Activated T-helper 2 cell treated with anti-CD3 and anti-CD28 coated beads, Interferon-gamma antibody, Interleukin-2, Interleukin-4, amounts not matched to agents 10 μg/mL and 5 μg/mL and 100 μg/mL, durations not matched to agents 14 hours and 24 hours and 36 hours (primary cell): ENCODE measurements at regions of chr3 and their contacts with region 1.

Region 1: GRCh38 chr3:102089904-102090492 is 240.7 kb downstream of the NFKBIZ start:
- DNase-seq: no peak
- H3K4me3 Mint-ChIP-seq: no peak overlapping the region
- H3K27ac Mint-ChIP-seq: peak overlapping the region; percentile 31
- H3K4me1 Mint-ChIP-seq: peaks cover 63% of the 10 kb centered on the region
- H3K27me3 Mint-ChIP-seq: no peaks in the 10 kb centered on the region

Region 2: DNA sequence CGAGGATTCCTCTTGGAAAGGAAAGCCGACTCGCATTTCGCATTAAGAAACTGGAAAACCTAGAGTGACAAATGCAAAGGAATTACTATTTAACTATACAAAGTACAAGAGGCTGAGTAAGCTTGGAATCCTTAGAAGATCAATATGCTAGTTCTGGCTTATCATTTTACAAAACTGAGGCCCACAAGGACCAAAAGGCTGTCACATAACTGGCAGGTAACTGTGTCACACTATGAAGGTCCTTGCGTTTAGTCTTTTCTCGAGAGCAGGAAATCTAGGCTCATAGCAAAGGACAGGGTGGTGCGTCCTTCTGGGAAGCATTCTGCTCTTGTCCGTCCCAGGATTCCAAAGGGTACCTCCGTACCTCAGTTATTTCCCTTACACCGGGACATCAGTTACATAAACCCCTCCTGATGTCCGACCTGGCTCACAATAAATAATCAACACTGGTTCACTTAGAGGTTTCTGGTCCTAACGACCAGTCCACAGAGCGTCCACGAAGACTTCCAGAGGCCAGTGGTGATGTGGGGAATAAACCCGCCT is 404.1 kb before region 1 on chr3:
- intact Hi-C with region 1: loop called (anchors 10 kb)
- DNase-seq: peak; percentile 31
- H3K4me3 Mint-ChIP-seq: peak overlapping the region; percentile 99
- H3K27ac Mint-ChIP-seq: peak overlapping the region; percentile 98
- H3K4me1 Mint-ChIP-seq: peaks cover 30% of the 10 kb centered on the region
- H3K27me3 Mint-ChIP-seq: no peaks in the 10 kb centered on the region

Region 3: GRCh38 chr3:101744735-101745134 is 345.3 kb before region 1 on chr3:
- intact Hi-C with region 1: no loop called
- DNase-seq: no peak
- H3K4me3 Mint-ChIP-seq: no peak overlapping the region
- H3K27ac Mint-ChIP-seq: peak overlapping the region; percentile 5
- H3K4me1 Mint-ChIP-seq: peaks cover 7% of the 10 kb centered on the region
- H3K27me3 Mint-ChIP-seq: no peaks in the 10 kb centered on the region

Region 4: DNA sequence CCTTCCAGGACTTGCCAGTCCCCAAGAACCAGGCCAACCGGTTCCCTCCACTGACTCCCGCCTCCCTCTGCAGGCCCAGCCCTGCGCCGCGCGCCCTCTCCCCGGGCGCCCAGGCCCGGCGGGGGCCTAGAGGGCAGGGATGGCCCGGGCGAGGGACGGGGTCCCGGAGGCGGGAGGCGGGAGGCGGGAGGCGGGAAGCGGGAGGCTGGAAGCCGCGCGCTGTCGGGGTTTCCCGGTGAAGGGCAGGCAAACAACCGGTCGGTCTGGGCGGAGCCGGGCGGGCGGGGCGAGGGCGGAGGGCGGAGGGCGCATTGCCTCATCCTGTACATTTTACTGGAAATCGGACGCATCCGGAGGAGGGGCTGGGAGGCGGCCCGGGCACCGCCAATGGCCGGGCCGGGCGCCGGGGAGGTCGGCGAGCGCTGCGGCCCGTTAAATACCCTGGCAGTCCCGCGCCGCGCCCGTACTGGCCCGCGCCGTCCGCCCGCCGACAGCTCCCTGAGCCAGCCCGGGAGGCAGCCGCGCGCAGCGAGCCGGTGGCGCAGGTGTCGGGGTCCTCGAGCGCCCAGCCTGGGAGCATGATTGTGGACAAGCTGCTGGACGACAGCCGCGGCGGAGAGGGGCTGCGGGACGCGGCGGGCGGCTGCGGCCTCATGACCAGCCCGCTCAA is 240.8 kb before region 1 on chr3 and contains the start of gene NFKBIZ:
- intact Hi-C with region 1: loop called (anchors 1 kb)
- DNase-seq: peak; percentile 90
- H3K4me3 Mint-ChIP-seq: peak within 1 kb of the TSS; percentile 94
- H3K27ac Mint-ChIP-seq: peak within 1 kb of the TSS; percentile 97
- H3K4me1 Mint-ChIP-seq: peaks cover 44% of the 10 kb centered on the region
- H3K27me3 Mint-ChIP-seq: no peaks in the 10 kb centered on the region
- total RNA-seq, gene NFKBIZ: 122 and 140 TPM in 2 replicates

Region 5: DNA sequence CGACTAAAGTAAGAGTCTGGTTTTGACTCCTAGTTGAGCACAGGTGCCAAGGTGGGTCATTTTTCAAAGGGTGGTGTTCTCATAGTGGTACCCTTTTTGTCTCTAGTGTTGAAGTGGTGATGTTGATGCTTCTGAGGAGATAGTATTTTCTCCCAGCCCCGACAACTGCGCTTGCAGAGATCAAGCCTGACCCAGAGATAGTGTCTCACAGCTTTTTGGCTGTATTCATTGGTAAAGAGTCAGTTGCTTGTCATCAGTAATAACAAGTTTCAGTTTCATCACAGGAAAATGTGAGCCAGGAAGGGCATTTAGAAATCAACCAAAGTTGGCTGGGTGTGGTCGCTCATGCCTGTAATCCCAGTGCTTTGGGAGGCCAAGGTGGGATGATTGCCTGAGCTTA is 101.4 kb before region 1 on chr3:
- intact Hi-C with region 1: loop called (anchors 1 kb)
- DNase-seq: peak; percentile 15
- H3K4me3 Mint-ChIP-seq: no peak overlapping the region
- H3K27ac Mint-ChIP-seq: peak overlapping the region; percentile 92
- H3K4me1 Mint-ChIP-seq: peaks cover 62% of the 10 kb centered on the region
- H3K27me3 Mint-ChIP-seq: peaks cover 13% of the 10 kb centered on the region

Region 6: DNA sequence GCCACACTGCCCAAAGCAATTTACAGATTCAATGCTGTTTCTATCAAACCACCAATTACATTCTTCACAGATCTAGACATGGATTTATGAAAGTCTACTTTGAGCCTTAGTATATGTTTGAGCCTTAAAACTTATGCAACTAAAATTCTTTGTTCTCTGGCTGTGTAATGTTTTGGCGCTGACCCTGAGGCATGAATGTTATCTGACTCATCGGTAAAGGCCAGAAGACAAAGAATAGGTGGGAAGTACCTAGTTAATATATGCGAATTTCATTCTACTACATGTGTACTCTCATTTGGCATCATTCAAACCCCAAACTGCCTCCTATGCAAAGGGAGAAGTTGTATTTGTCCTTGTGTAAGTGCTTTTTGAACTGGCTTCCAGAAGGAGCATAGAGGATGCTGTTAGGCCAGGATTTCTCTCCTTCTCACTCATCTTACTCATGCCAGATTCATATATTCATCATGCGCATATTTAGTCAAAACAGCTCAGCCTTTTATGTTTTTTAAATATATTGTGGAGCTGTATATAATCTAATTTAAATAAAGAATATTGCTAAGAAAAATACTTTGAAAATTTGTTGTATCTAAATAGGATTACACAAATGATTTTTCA is 36.5 kb before region 1 on chr3:
- intact Hi-C with region 1: loop called (anchors 2 kb)
- DNase-seq: no peak
- H3K4me3 Mint-ChIP-seq: no peak overlapping the region
- H3K27ac Mint-ChIP-seq: no peak overlapping the region
- H3K4me1 Mint-ChIP-seq: peaks cover 24% of the 10 kb centered on the region
- H3K27me3 Mint-ChIP-seq: no peaks in the 10 kb centered on the region

Region 7: DNA sequence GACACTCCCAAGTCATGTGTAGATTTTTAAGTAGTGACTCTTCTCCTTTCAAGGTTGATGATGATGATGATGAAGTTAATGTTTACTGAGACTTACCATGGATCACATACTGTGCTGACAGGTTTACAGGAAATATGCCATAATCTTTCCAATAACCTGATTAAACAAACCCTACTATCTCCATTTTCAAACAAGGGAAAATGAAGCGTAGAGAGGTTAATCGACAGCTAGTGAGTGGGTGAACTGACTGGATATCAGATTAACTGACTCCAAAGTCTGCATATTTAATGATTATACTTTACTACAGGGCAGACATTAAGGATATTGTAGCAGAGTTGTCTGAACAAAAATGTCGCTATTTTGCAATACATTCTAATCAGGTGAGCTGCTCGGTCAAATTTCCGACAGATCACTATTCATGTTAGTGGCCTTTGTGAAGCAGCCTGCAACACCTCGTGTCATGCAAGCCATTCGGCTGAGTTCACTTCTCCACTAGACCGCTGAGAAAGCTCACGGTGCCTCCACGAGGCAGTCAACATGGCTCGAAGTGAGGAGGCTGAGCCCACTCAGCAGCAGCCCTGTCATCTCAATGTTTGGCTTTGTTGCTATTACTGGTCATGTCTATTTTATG is 23.5 kb after region 1 on chr3:
- intact Hi-C with region 1: loop called (anchors 1 kb)
- DNase-seq: no peak
- H3K4me3 Mint-ChIP-seq: no peak overlapping the region
- H3K27ac Mint-ChIP-seq: peak overlapping the region; percentile 79
- H3K4me1 Mint-ChIP-seq: peaks cover 36% of the 10 kb centered on the region
- H3K27me3 Mint-ChIP-seq: no peaks in the 10 kb centered on the region

Region 8: DNA sequence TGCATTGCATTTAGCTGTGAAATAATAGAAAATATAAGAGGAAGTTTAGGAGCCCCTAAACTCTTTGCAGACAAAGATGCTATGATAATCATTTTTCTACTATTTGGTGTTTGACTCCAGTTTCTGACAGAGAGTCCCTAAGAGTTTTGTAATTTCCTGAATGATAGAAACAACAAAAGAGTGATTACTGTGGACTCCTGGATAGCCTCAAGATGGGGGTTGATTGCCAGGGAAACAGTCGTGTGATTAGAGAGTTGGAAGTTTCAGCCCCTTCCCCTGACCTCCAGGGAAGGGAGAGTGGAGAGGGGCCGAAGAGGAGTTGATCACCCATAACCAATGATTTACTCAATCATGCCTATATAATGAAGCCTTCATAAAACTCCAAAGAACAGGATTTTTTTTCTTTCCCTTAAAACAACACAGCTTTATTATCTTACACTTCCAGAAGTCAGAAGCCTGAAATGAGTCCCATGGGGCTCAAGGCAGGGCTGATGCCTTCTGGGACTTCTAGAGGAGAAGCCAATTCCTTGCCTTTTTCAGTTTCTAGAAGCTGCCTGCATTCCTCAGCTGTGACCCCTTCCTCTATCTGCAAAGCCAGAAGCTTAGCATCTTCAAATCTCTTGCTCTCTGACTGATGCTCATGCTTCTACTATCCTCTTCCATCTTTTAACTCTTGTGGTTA is 52.5 kb after region 1 on chr3:
- intact Hi-C with region 1: no loop called
- DNase-seq: no peak
- H3K4me3 Mint-ChIP-seq: no peak overlapping the region
- H3K27ac Mint-ChIP-seq: no peak overlapping the region
- H3K4me1 Mint-ChIP-seq: no peaks in the 10 kb centered on the region
- H3K27me3 Mint-ChIP-seq: peaks cover 18% of the 10 kb centered on the region

Region 9: GRCh38 chr3:102156426-102156825 is 66.4 kb after region 1 on chr3:
- intact Hi-C with region 1: no loop called
- DNase-seq: no peak
- H3K4me3 Mint-ChIP-seq: no peak overlapping the region
- H3K27ac Mint-ChIP-seq: no peak overlapping the region
- H3K4me1 Mint-ChIP-seq: peaks cover 4% of the 10 kb centered on the region
- H3K27me3 Mint-ChIP-seq: no peaks in the 10 kb centered on the region

Region 10: DNA sequence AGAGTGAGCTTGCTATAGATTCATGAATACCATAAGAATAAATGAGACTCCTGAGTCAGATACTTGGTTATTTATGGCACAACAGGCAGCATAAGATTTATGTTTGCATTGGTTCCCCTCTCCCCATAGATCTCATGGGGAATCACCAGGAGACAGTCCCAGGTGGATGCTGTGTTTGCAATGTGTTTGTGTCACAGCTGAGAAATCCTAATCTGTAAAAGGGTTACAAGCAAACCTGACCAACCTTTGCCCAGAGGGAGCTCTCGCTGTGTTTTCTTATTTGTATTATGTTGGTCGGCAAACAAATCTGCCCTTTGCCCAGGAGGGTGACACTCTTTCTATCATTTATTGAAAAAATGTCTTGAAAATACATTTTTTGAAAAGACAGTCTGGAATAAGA is 581.0 kb after region 1 on chr3:
- intact Hi-C with region 1: no loop called
- DNase-seq: no peak
- H3K4me3 Mint-ChIP-seq: no peak overlapping the region
- H3K27ac Mint-ChIP-seq: no peak overlapping the region
- H3K4me1 Mint-ChIP-seq: peaks cover 4% of the 10 kb centered on the region
- H3K27me3 Mint-ChIP-seq: peaks cover 8% of the 10 kb centered on the region